Activated CD4-positive, alpha-beta memory T cell treated with anti-CD3 and anti-CD28 coated beads for 36 hours (primary cell): ENCODE measurements at regions of chr20 and their contacts with region 1.

Region 1: DNA sequence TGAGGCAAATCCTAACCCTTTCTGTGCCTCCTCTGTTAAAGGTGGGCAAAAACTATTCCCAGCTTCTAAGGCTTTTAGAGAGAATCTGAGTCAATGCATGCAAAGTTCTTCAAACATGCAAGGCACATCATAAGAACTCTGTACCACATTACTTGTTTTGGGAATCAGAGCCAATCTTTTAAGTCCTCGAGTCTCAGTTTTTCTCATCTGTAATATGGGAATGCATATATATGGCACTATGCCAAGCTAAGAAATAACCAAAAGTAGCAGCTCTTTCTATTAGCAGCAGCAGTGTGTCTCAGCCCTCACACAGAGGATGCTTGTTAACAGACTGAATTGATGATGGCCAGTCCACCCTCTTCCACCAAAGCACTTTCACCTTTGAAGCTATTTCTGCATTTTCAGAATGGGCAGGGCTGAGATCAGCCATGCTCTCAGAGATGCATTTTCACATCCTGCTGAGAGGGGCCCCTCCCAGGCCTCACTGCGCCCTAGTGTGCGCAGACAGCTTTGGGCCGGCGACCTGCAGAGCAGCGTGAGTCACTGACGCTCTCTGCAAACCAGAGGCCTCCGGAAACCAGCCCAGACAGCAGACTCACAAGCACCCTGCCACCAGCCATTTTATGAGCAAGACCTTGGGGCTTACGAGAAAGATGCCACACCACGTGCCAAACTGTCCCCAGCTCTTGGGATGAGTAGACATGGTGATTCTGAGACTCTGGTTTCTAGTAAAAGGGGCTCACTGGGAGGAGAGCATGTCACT is 138.0 kb downstream of the NFATC2 start:
- DNase-seq: peak; percentile 97
- H3K4me3 Mint-ChIP-seq: peak overlapping the region; percentile 17
- H3K27ac Mint-ChIP-seq: peak overlapping the region; percentile 99
- H3K4me1 Mint-ChIP-seq: peaks cover 93% of the 10 kb centered on the region
- H3K27me3 Mint-ChIP-seq: no peaks in the 10 kb centered on the region

Region 2: DNA sequence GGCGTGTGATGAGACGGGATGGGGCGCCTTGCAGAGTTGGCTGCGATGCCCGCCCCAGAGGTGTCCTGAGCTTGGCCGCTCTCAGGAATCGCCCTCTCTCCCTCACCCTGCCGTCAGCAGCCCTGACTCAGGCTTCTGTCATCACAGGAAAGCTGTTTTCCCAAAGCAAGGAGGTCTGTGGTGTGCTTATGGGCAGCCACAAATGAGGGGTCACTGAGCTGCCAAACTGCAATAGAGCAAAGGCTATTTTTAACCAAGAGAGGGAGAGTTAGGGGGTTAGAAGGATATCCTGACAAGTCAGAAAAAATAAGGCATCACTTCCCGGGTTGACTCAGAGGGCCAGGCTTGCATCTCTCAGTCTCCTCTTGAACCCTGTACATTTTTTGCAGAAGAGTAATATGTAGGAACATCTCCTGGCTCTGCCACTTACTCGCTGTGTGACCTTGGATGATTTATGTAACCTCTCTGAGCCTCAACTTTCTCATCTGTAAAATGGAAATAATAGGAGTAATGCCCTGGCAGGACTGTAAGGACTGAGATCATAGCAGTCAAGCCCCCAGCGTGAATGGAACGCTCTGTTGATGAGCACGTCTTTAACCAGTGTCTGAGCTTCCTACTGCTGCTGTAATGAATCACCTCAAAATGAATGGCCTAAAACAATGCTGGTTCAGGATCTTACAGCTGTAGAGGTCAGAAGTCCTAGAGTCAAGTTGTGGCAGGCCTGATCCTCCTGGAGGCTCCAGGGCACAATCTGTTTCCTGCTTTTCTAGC is 43.8 kb before region 1 on chr20:
- CTCF ChIA-PET with region 1: no interaction called
- POLR2A ChIA-PET with region 1: no interaction called
- intact Hi-C with region 1: no loop called
- DNase-seq: no peak
- H3K4me3 Mint-ChIP-seq: no peak overlapping the region
- H3K27ac Mint-ChIP-seq: no peak overlapping the region
- H3K4me1 Mint-ChIP-seq: peaks cover 3% of the 10 kb centered on the region
- H3K27me3 Mint-ChIP-seq: no peaks in the 10 kb centered on the region

Region 3: GRCh38 chr20:51385646-51386530 is 18.6 kb before region 1 on chr20:
- CTCF ChIA-PET with region 1: interaction called, 17 read pairs
- POLR2A ChIA-PET with region 1: interaction called, 15 read pairs
- intact Hi-C with region 1: loop called (anchors 1 kb)
- DNase-seq: peak; percentile 50
- H3K4me3 Mint-ChIP-seq: no peak overlapping the region
- H3K27ac Mint-ChIP-seq: no peak overlapping the region
- H3K4me1 Mint-ChIP-seq: peaks cover 73% of the 10 kb centered on the region
- H3K27me3 Mint-ChIP-seq: no peaks in the 10 kb centered on the region

Region 4: GRCh38 chr20:51440589-51440988 is 36.1 kb after region 1 on chr20:
- CTCF ChIA-PET with region 1: no interaction called
- POLR2A ChIA-PET with region 1: no interaction called
- intact Hi-C with region 1: no loop called
- DNase-seq: no peak
- H3K4me3 Mint-ChIP-seq: no peak overlapping the region
- H3K27ac Mint-ChIP-seq: peak overlapping the region; percentile 56
- H3K4me1 Mint-ChIP-seq: peaks cover 69% of the 10 kb centered on the region
- H3K27me3 Mint-ChIP-seq: no peaks in the 10 kb centered on the region

Region 5: DNA sequence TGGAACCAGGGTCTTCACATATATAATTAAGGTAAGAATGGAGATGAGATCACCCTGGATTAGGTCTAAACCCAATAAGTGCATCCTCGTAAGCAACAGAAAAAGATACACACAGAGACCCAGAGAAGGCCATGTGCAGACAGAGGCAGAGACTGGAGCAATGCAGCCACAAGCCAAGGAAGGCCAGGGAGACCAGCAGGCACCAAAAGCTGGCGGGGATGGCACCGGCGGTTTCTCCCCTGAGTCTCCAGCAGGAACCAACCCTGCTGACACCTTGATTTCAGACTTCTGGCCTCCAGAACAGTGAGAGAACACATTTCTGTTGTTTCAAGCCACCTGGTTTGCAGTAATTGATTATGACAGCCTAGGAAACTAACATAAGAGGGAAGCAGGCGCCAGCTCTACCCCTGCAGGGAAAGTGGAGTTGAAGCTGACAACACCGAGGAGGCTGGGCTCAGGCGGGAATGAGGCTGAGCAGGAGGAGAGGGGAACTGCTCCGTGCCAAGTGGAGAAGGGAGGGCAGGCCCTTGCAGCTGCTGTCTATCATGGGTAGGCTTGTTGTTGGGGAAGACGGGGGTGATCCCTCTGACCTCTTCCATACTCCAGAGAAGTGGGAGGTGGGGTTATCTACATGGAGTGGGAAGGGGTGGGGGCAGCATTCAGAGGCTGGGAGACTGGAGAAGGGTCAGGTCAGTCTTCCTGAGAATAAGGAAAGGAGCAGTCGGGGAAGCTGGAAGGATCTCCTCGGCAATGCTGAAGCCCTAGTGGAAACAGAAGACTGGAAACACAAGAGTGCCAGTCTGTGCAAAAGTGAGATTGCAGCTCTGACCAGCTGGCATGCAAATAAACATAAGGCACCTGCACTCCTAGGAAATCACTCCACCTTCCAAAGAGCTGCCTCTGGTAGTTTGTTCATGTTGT is 65.4 kb after region 1 on chr20:
- CTCF ChIA-PET with region 1: no interaction called
- POLR2A ChIA-PET with region 1: interaction called, 3 read pairs
- intact Hi-C with region 1: loop called (anchors 2 kb)
- DNase-seq: no peak
- H3K4me3 Mint-ChIP-seq: no peak overlapping the region
- H3K27ac Mint-ChIP-seq: peak overlapping the region; percentile 89
- H3K4me1 Mint-ChIP-seq: peaks cover 53% of the 10 kb centered on the region
- H3K27me3 Mint-ChIP-seq: no peaks in the 10 kb centered on the region